Pancreas (tissue), 10 donors: ENCODE measurements at regions of chr17 and their contacts with region 1.

Region 1: GRCh38 chr17:4980644-4981216 is 6.7 kb downstream of the CAMTA2 start:
- DNase-seq: no peak
- ATAC-seq: peak; percentile 66 to 80 (median 76)
- H3K4me3 ChIP-seq: no peak overlapping the region
- H3K27ac ChIP-seq: no peak overlapping the region
- H3K4me1 ChIP-seq: peaks cover 0 to 2% (median 1%) of the 10 kb centered on the region in 3 donors
- H3K27me3 ChIP-seq: no peaks in the 10 kb centered on the region
- CTCF ChIP-seq: peak; percentile 37 to 83 (median 67)

Region 2: GRCh38 chr17:5065227-5065744 is 84.6 kb after region 1 on chr17:
- intact Hi-C with region 1: loop called in 1 of 3 experiments (anchors 2 kb)
- DNase-seq: no peak
- ATAC-seq: no peak
- H3K4me3 ChIP-seq: no peak overlapping the region
- H3K27ac ChIP-seq: no peak overlapping the region
- H3K4me1 ChIP-seq: no peaks in the 10 kb centered on the region
- H3K27me3 ChIP-seq: no peaks in the 10 kb centered on the region
- CTCF ChIP-seq: no peak